A549 (cell line): ENCODE measurements at regions of chr10 and their contacts with region 1.

Region 1: GRCh38 chr10:86585037-86585725 is 63.6 kb upstream of the WAPL start:
- DNase-seq: peak; percentile 73 to 81
- ATAC-seq: peak; percentile 94 to 98
- H3K4me3 ChIP-seq: no peak overlapping the region
- H3K27ac ChIP-seq: peak overlapping the region; percentile 11 to 63; a peak in 4 of 6 replicates
- H3K4me1 ChIP-seq: 0 out of 3 replicates have a peak, but pooled peaks cover 3% of the 10 kb centered on the region
- CTCF ChIP-seq: peak; percentile 96
- EP300 ChIP-seq: no peak
- POLR2A ChIP-seq: no peak
- RAD21 ChIP-seq: peak; percentile 95

Region 2: DNA sequence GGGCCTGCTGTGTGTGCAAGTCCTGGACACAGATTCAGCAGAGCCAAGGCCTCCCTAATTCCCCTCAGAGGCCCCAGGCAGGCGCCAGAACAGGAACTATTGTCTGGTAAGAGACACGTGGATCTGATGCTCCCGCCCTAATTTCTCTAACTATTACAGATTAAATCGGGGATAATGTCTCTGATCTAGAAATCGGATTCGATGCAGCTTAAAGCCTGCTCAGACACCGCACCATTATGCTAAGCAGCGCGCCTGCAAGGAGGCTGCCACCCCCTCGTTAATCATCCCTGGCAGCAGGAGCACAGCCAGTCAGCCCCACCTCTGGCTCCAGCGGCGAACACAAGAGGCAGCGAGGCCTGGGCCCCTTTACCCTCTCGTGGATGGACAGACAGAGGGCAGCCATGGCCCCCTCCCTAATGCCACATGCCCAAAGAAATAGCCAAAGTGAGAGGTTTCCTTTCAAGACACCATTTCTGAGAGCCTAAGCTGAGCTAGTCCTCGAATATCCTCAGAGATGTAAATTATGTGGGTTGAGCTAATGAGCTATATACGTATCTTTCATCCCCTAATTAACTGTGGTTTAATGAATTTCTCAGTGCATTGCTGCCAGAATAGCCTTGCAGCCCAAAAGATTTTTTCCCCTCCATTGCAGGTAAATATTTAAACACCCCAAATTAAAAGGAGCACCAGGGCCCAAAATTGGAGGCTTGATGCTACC is 340.7 kb before region 1 on chr10:
- CTCF ChIA-PET with region 1: no interaction called
- POLR2A ChIA-PET with region 1: no interaction called
- DNase-seq: no peak
- ATAC-seq: no peak
- H3K4me3 ChIP-seq: no peak overlapping the region
- H3K27ac ChIP-seq: no peak overlapping the region
- H3K4me1 ChIP-seq: no peaks in the 10 kb centered on the region
- CTCF ChIP-seq: no peak
- EP300 ChIP-seq: no peak
- POLR2A ChIP-seq: no peak
- RAD21 ChIP-seq: no peak

Region 3: DNA sequence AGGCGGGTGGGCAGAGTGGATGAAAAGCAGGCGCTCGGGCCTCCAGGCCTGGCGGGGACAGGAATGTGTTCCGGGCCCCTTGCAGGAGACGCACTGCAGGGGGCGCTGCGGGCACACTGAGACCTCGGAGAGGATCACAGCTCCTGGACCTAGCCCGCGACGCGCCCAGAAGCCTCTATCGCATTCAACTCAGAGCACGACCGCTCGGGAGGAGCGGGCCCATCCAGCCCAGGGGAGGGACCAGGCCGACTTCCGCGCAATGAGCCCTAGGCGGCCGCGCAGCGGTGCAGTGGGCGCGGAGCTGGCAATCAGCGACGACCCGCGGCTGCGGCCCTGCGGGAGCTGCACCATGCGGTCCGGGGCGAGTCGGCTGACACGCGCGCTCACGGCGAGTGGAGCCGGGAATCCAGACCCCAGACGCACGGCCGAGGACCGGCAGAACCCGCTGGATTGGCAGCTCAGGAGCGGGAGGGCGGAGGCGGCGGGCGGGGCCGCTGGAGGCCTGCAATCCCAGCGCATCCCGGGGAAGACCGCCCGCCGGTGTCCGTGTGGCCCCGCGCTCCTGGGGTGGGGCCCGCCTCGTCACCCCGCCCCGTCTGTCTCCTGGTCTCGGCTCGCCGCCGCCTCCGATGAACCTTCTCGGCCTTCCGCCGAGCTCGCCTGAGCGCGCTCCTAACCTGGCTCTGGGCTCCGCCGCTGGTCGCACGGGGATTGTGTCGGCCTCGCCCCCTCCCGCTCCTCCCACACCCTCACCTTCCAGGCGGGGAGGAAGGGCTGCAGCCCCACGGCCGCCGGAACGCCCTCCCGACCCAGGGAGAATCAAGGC is 185.1 kb before region 1 on chr10:
- CTCF ChIA-PET with region 1: interaction called, 143 read pairs
- POLR2A ChIA-PET with region 1: interaction called, 18 read pairs
- DNase-seq: peak; percentile 95 to 97
- ATAC-seq: peak; percentile 88 to 93
- H3K4me3 ChIP-seq: peak overlapping the region; percentile 78
- H3K27ac ChIP-seq: peak overlapping the region; percentile 92 to 94
- H3K4me1 ChIP-seq: peaks cover 23% of the 10 kb centered on the region
- CTCF ChIP-seq: peak; percentile 94
- EP300 ChIP-seq: no peak
- POLR2A ChIP-seq: peak; percentile 60
- RAD21 ChIP-seq: peak; percentile 89 to 97

Region 4: GRCh38 chr10:86535057-86535882 is 49.9 kb before region 1 on chr10:
- CTCF ChIA-PET with region 1: interaction called, 12 read pairs
- POLR2A ChIA-PET with region 1: interaction called, 3 read pairs
- DNase-seq: peak; percentile 77 to 95
- ATAC-seq: peak; percentile 99
- H3K4me3 ChIP-seq: peak overlapping the region; percentile 48
- H3K27ac ChIP-seq: peak overlapping the region; percentile 81 to 91
- H3K4me1 ChIP-seq: peaks cover 9% of the 10 kb centered on the region
- CTCF ChIP-seq: no peak
- EP300 ChIP-seq: no peak
- POLR2A ChIP-seq: peak; percentile 66
- RAD21 ChIP-seq: 0 out of 5 replicates have a peak, but pooled peaks of 1 of the 2 experiments have one; percentile 24

Region 5: DNA sequence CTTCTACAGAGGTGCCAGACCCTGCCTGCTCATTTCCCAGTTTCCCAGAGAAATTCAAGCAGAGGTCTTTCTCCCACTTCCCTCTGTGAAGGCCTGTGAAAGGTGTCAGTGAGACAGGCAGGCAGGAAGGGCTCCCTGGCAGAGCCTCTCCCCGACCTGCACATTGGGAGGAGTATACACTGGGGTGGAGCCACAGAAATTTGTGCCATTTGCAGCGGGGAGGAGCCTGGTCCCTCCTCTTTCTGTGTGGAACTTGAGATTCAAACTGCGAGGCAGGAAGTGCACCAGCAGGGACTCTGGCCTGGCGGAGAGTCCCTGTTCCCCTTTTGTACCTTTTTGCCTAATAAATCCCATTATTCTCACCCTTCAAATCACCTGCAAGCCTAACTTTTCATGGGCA is 14.5 kb after region 1 on chr10:
- CTCF ChIA-PET with region 1: interaction called, 35 read pairs
- POLR2A ChIA-PET with region 1: no interaction called
- DNase-seq: no peak
- ATAC-seq: peak; percentile 26 to 55; a peak in 3 of 6 replicates
- H3K4me3 ChIP-seq: no peak overlapping the region
- H3K27ac ChIP-seq: no peak overlapping the region
- H3K4me1 ChIP-seq: peaks cover 2% of the 10 kb centered on the region; the same call in 2 of the 3 replicates
- CTCF ChIP-seq: no peak
- EP300 ChIP-seq: no peak
- POLR2A ChIP-seq: no peak
- RAD21 ChIP-seq: no peak